CD4-positive, alpha-beta memory T cell (primary cell): ENCODE measurements at regions of chr1 and their contacts with region 1.

Region 1: DNA sequence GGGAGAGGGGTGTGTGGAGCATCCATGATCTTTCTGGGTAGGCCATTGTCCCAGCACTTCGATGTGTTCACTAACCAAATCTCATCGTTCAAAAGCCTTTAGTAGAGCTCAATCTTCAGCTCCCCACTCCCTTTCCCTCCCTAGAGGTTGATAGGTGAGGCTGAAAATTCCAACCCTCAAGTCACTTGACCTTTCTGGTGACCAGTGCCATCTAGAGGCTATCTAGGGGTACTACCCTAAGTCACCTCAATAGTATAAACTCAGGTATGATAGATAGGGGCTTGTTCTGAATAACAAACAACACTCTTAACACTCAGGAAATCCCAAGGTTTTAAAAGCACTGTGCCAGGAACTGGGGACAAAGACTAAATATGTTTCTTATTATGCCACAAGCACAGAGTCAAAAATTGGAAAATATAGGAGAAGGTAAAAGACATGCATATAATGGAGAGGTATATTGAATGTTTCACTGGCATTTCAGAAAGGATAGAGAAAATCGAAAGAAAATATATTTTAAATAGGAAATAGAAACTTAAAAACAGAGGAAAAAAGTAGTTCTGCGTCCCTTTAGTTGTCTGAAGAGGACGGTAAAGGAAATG is 42.9 kb upstream of the CD53 start:
- DNase-seq: peak; percentile 41 to 63 (median 57)
- H3K4me3 ChIP-seq: no peak overlapping the region
- H3K4me3 Mint-ChIP-seq: no peak overlapping the region
- H3K27ac ChIP-seq: no peak overlapping the region
- H3K27ac Mint-ChIP-seq: peak overlapping the region in 1 of 7 donors; percentile 42
- H3K4me1 ChIP-seq: peaks cover 7% of the 10 kb centered on the region
- H3K4me1 Mint-ChIP-seq: peaks cover 5 to 8% (median 7%) of the 10 kb centered on the region in 4 donors
- H3K27me3 ChIP-seq: no peaks in the 10 kb centered on the region
- H3K27me3 Mint-ChIP-seq: peaks cover 0 to 10% of the 10 kb centered on the region in 2 donors

Region 2: GRCh38 chr1:110726755-110727154 is 103.3 kb before region 1 on chr1:
- CTCF ChIA-PET with region 1: no interaction called
- POLR2A ChIA-PET with region 1: no interaction called
- intact Hi-C with region 1: no loop called
- DNase-seq: peak in 4 of 5 donors; percentile 8 to 36 (median 16)
- H3K4me3 ChIP-seq: no peak overlapping the region
- H3K4me3 Mint-ChIP-seq: peak overlapping the region; percentile 57 to 84 (median 76)
- H3K27ac ChIP-seq: peak overlapping the region; percentile 30
- H3K27ac Mint-ChIP-seq: peak overlapping the region; percentile 19 to 82 (median 74)
- H3K4me1 ChIP-seq: peaks cover 29% of the 10 kb centered on the region
- H3K4me1 Mint-ChIP-seq: peaks cover 25 to 37% (median 32%) of the 10 kb centered on the region in 4 donors
- H3K27me3 ChIP-seq: no peaks in the 10 kb centered on the region
- H3K27me3 Mint-ChIP-seq: no peaks in the 10 kb centered on the region

Region 3: GRCh38 chr1:110798691-110799256 is 31.3 kb before region 1 on chr1:
- CTCF ChIA-PET with region 1: interaction called, 13 read pairs
- POLR2A ChIA-PET with region 1: no interaction called
- intact Hi-C with region 1: no loop called
- DNase-seq: no peak
- H3K4me3 ChIP-seq: no peak overlapping the region
- H3K4me3 Mint-ChIP-seq: no peak overlapping the region
- H3K27ac ChIP-seq: no peak overlapping the region
- H3K27ac Mint-ChIP-seq: no peak overlapping the region
- H3K4me1 ChIP-seq: no peaks in the 10 kb centered on the region
- H3K4me1 Mint-ChIP-seq: peaks cover 0 to 2% (median under 1%) of the 10 kb centered on the region in 4 donors
- H3K27me3 ChIP-seq: no peaks in the 10 kb centered on the region
- H3K27me3 Mint-ChIP-seq: peaks cover 0 to 4% of the 10 kb centered on the region in 2 donors

Region 4: DNA sequence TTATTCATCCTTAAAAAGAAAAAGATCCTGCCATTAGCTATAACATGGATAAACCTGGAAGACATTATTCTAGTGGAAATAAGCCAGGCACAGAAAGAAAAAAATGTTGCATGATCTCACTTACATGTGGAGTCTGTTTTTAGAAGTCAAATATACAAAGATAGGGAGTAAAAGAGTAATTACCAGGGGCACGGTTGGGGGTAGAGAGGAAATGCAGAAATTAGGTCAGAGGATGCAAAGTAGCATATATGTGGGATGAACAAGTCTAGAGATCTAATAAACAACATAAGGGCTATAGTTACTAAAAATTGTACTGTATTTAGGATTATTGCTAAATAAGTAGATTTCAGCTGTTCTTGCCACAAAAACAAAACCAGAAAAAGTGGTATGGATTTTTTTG is 18.5 kb before region 1 on chr1:
- CTCF ChIA-PET with region 1: interaction called, 19 read pairs
- POLR2A ChIA-PET with region 1: interaction called, 3 read pairs
- intact Hi-C with region 1: no loop called
- DNase-seq: no peak
- H3K4me3 ChIP-seq: no peak overlapping the region
- H3K4me3 Mint-ChIP-seq: peak overlapping the region in 5 of 8 donors; percentile 0 to 46 (median 19)
- H3K27ac ChIP-seq: no peak overlapping the region
- H3K27ac Mint-ChIP-seq: peak overlapping the region in 1 of 7 donors; percentile 43
- H3K4me1 ChIP-seq: peaks cover 8% of the 10 kb centered on the region
- H3K4me1 Mint-ChIP-seq: peaks cover 6 to 16% (median 10%) of the 10 kb centered on the region in 4 donors
- H3K27me3 ChIP-seq: no peaks in the 10 kb centered on the region
- H3K27me3 Mint-ChIP-seq: peaks cover 0 to 2% of the 10 kb centered on the region in 2 donors

Region 5: GRCh38 chr1:110816930-110817329 is 13.1 kb before region 1 on chr1:
- CTCF ChIA-PET with region 1: interaction called, 19 read pairs
- POLR2A ChIA-PET with region 1: no interaction called
- intact Hi-C with region 1: no loop called
- DNase-seq: no peak
- H3K4me3 ChIP-seq: no peak overlapping the region
- H3K4me3 Mint-ChIP-seq: no peak overlapping the region
- H3K27ac ChIP-seq: no peak overlapping the region
- H3K27ac Mint-ChIP-seq: peak overlapping the region in 1 of 7 donors; percentile 2
- H3K4me1 ChIP-seq: no peaks in the 10 kb centered on the region
- H3K4me1 Mint-ChIP-seq: peaks cover 0 to 6% (median 3%) of the 10 kb centered on the region in 4 donors
- H3K27me3 ChIP-seq: no peaks in the 10 kb centered on the region
- H3K27me3 Mint-ChIP-seq: peaks cover 0 to 2% of the 10 kb centered on the region in 2 donors

Region 6: GRCh38 chr1:110846861-110847260 is 16.8 kb after region 1 on chr1:
- CTCF ChIA-PET with region 1: interaction called, 5 read pairs
- POLR2A ChIA-PET with region 1: no interaction called
- intact Hi-C with region 1: loop called (anchors 1 kb)
- DNase-seq: no peak
- H3K4me3 ChIP-seq: no peak overlapping the region
- H3K4me3 Mint-ChIP-seq: no peak overlapping the region
- H3K27ac ChIP-seq: no peak overlapping the region
- H3K27ac Mint-ChIP-seq: no peak overlapping the region
- H3K4me1 ChIP-seq: no peaks in the 10 kb centered on the region
- H3K4me1 Mint-ChIP-seq: peaks cover 0 to 2% (median 0%) of the 10 kb centered on the region in 4 donors
- H3K27me3 ChIP-seq: no peaks in the 10 kb centered on the region
- H3K27me3 Mint-ChIP-seq: peaks cover 0 to 10% of the 10 kb centered on the region in 2 donors

Region 7: DNA sequence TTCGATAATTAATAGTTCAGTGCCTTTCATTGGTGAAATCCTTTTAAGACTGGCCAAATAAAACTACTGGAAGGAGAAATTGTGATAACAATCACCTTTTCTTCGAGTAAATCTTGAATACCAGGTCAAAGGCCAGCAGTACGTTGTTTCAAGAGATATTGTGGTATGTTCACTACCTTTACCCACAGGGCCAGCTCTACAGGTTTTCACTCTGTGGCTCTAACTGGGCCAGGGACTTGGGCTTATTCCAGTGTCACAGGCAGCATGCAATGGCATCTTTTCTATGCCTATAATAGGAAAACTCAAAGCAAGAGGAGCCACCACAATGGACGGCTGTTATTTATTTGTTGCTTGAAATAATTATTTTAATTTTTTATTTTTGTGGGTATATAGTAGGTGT is 160.5 kb after region 1 on chr1:
- CTCF ChIA-PET with region 1: interaction called, 7 read pairs
- POLR2A ChIA-PET with region 1: no interaction called
- intact Hi-C with region 1: loop called (anchors 2 kb)
- DNase-seq: no peak
- H3K4me3 ChIP-seq: no peak overlapping the region
- H3K4me3 Mint-ChIP-seq: no peak overlapping the region
- H3K27ac ChIP-seq: no peak overlapping the region
- H3K27ac Mint-ChIP-seq: no peak overlapping the region
- H3K4me1 ChIP-seq: no peaks in the 10 kb centered on the region
- H3K4me1 Mint-ChIP-seq: peaks cover 0 to 4% (median 2%) of the 10 kb centered on the region in 4 donors
- H3K27me3 ChIP-seq: no peaks in the 10 kb centered on the region
- H3K27me3 Mint-ChIP-seq: peaks cover 5 to 9% of the 10 kb centered on the region in 2 donors